PC-3 (cell line): ENCODE measurements at regions of chr3 and their contacts with region 1.

Region 1: GRCh38 chr3:72768006-72768441 is 80.2 kb downstream of the SHQ1 start:
- DNase-seq: no peak
- ATAC-seq: no peak
- H3K4me3 ChIP-seq: no peak overlapping the region
- H3K27ac ChIP-seq: no peak overlapping the region
- H3K4me1 ChIP-seq: no peaks in the 10 kb centered on the region
- H3K27me3 ChIP-seq: no peaks in the 10 kb centered on the region
- CTCF ChIP-seq: no peak

Region 2: DNA sequence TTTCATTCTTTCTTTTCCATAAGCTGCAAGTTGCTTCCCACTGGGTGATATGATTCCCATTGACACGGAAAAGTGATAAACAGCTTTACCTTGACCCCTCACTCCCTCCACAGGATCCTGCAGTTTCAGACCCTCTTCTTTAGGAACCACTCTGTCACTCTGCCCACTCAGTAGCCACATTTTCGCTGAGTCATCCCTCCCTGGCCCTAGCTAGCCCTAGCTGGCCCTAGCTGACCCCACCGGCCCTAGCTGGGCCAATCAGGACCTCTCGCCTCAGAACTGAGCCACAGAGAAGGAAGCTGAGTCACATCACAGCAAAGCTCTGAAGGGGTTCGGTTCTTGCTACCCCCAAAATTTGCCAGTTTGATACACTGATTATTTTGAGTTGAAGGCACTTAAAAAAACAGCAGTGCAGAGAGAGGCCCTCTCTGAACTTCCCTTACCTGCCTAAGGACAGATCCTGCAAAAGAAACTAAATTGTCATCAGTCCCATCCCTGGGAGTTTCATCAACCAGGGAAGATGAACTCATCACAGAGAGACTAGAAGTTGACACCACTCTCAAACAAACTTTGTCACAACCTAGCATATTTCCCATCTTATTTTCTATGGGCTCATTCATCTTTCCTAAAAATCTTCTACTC is 749.6 kb before region 1 on chr3:
- CTCF ChIA-PET with region 1: interaction called, 11 read pairs
- POLR2A ChIA-PET with region 1: no interaction called
- intact Hi-C with region 1: no loop called
- DNase-seq: no peak
- ATAC-seq: no peak
- H3K4me3 ChIP-seq: no peak overlapping the region
- H3K27ac ChIP-seq: no peak overlapping the region
- H3K4me1 ChIP-seq: no peaks in the 10 kb centered on the region
- H3K27me3 ChIP-seq: peaks cover 21% of the 10 kb centered on the region
- CTCF ChIP-seq: no peak

Region 3: DNA sequence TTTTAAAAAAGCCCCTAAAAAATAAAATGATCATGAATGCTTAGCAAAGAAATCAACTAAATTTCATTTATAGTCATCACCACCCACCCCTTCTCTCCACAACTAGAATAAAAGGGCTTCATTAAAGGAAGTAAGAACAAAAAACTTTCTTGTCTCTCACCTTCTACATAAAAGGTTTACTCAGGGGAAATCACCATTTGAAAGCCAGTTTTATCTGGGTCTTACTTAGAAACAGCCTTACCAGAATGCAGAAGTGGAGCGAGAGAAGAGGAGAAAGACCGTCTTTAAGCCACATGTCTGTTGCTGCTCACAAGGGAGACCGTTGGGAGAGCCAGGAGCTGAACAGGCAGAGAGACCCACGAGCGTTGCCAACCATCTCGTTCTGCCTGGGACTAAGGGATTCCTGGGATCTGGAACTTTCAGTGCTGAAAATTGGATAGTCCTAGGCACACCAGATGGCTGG is 633.0 kb before region 1 on chr3:
- CTCF ChIA-PET with region 1: no interaction called
- POLR2A ChIA-PET with region 1: no interaction called
- intact Hi-C with region 1: no loop called
- DNase-seq: no peak
- ATAC-seq: no peak
- H3K4me3 ChIP-seq: no peak overlapping the region
- H3K27ac ChIP-seq: no peak overlapping the region
- H3K4me1 ChIP-seq: no peaks in the 10 kb centered on the region
- H3K27me3 ChIP-seq: peaks cover 26% of the 10 kb centered on the region
- CTCF ChIP-seq: no peak